ENCODE measurements at regions of chr17 and their contacts with region 1.

Region 1: DNA sequence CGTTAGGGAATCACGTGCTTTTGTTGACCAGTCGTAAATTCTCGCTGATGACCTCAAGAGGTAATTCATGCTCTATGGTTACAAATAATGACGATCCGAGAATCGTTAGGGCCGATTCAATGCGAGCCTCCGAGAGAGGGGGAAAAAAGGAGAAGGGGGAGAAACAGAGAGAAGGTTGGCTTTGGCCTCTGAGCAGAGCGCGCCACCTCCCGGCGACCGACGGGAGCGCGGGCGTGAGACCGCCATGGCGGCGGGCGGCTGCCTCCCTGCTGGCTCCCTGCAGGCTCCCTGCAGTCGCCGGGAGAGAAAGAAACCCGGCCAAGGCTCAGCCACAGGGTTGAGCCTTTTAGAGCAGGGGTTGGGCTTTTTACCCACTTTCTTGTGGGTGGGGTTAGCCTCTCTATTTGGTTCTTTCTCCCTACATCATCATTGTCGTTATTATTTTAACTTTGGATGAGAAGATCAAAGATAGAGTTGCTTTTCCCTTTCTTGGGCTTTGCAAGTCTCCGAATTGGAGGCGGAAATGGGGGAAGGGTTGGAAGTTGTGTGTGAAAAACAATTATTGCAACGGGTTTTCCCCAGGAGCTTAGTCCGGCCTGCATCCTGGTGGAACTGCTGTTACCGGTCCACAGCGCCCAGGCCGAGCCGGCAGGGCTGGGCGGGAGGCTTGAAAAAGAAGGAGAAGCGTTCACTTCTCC is 410 bp upstream of the HOXB5 start:
- DNase-seq: peak; percentile 81 to 94
- ATAC-seq: peak; percentile 74 to 92
- H3K4me3 ChIP-seq: peak overlapping the region; percentile 22; the same call in 2 of the 3 replicates
- H3K27ac ChIP-seq: peak overlapping the region in 1 of 2 experiments; percentile 60; a peak in 4 of 6 replicates
- H3K4me1 ChIP-seq: peaks cover 5% of the 10 kb centered on the region
- CTCF ChIP-seq: peak; percentile 99
- EP300 ChIP-seq: no peak
- POLR2A ChIP-seq: no peak
- RAD21 ChIP-seq: peak; percentile 91 to 94

Region 2: DNA sequence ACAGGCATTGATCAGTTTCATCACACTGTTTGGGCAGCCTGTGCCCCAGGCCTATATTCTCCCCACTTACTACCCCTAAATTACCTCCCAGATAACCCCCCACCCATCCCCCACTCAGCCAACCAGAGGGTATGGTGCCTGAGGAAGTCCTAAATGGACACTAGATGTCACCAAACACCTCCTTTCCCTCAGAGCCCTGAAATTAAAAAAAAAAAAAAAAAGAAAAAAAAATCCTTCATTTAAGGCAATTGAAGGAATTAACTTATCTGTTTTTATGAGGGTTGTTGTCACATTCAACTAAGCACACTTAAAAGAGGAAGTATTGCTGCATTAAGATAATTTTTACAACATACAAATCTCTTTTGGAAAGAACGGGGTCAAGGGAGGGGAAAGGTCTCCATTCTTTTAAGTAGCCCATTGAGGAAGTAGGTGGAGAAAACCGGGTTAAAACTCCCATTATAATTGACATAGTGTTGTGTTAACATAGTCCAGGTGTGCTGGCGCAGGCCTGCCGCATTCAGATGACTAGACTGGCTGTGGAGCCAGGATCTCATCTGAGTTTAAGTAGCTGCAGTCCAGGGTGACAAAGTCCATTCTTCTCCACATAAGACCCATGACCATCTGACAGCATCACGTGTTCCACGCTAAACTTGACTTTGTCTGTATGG is 440.2 kb before region 1 on chr17:
- CTCF ChIA-PET with region 1: interaction called, 11 read pairs
- POLR2A ChIA-PET with region 1: no interaction called
- DNase-seq: peak; percentile 74 to 75
- ATAC-seq: peak; percentile 72 to 87
- H3K4me3 ChIP-seq: no peak overlapping the region
- H3K27ac ChIP-seq: no peak overlapping the region
- H3K4me1 ChIP-seq: peaks cover 5% of the 10 kb centered on the region
- CTCF ChIP-seq: peak; percentile 84
- EP300 ChIP-seq: no peak
- POLR2A ChIP-seq: no peak
- RAD21 ChIP-seq: peak; percentile 78 to 84

Region 3: DNA sequence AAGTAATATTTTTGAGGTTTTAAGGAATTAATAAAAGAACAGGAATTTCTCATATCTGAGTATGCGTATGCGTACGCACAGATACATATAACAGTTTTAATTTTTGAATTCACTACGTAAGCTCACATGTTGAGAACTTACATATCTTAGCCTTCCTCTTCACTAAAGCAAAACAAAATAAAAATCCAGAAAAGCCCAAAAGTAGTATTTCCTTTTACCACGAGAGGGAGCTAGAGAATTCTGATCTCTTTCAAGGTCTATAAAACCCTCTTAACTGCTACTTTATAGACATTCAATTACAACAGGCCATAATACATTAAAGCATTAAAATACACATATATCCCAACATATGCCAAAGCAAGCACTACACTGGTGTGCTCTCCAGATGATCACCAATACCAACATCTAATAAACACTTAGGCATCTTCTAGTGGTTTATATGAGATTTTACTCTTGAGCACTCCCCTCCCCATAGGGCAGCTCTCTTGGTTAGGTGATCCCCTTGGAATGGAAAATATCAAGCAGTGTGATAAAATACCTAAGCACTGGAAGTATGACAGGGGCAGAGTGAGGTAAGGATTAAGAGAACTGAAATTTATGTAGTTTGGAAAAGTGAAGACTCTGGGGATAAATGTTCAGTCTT is 258.0 kb before region 1 on chr17:
- CTCF ChIA-PET with region 1: interaction called, 19 read pairs
- POLR2A ChIA-PET with region 1: no interaction called
- DNase-seq: peak; percentile 35 to 68
- ATAC-seq: peak; percentile 71 to 74; a peak in 5 of 6 replicates
- H3K4me3 ChIP-seq: no peak overlapping the region
- H3K27ac ChIP-seq: no peak overlapping the region
- H3K4me1 ChIP-seq: peaks cover 17% of the 10 kb centered on the region
- CTCF ChIP-seq: peak; percentile 94
- EP300 ChIP-seq: no peak
- POLR2A ChIP-seq: no peak
- RAD21 ChIP-seq: peak; percentile 75 to 79

Region 4: DNA sequence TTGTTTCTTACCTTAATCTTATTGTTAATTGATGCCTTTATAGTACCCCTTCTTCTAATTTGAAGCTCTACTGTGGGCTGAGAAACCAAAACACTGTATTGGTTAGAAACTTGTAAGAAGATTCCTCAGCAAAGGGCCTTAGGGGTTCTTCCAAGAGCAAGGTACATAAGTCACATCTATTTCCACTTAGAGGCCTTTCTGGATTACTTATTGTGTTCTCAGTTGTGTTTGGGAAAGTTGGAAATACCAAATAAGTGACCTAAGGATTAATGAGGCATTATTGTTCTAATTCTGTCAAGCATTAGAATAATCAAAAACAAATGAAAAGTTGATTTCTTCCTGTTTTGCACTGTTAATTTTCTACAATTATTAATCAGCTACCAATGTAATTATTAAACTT is 249.7 kb before region 1 on chr17:
- CTCF ChIA-PET with region 1: interaction called, 19 read pairs
- POLR2A ChIA-PET with region 1: no interaction called
- DNase-seq: no peak
- ATAC-seq: no peak
- H3K4me3 ChIP-seq: no peak overlapping the region
- H3K27ac ChIP-seq: no peak overlapping the region
- H3K4me1 ChIP-seq: no peaks in the 10 kb centered on the region
- CTCF ChIP-seq: no peak
- EP300 ChIP-seq: no peak
- POLR2A ChIP-seq: no peak
- RAD21 ChIP-seq: no peak

Region 5: GRCh38 chr17:48500966-48501426 is 93.0 kb before region 1 on chr17:
- CTCF ChIA-PET with region 1: interaction called, 15 read pairs
- POLR2A ChIA-PET with region 1: no interaction called
- DNase-seq: peak in 1 of 2 experiments; percentile 53
- ATAC-seq: peak; percentile 40 to 76; a peak in 4 of 6 replicates
- H3K4me3 ChIP-seq: no peak overlapping the region
- H3K27ac ChIP-seq: 0 out of 6 replicates have a peak overlapping the region, but pooled peaks of 1 of the 2 experiments have one; percentile 2
- H3K4me1 ChIP-seq: peaks cover 25% of the 10 kb centered on the region
- CTCF ChIP-seq: no peak; the same call in 2 of the 3 replicates
- EP300 ChIP-seq: no peak
- POLR2A ChIP-seq: no peak
- RAD21 ChIP-seq: peak; percentile 32 to 53; a peak in 3 of 5 replicates

Region 6: GRCh38 chr17:48555258-48556228 is 38.4 kb before region 1 on chr17:
- CTCF ChIA-PET with region 1: interaction called, 11 read pairs
- POLR2A ChIA-PET with region 1: no interaction called
- DNase-seq: peak; percentile 83 to 93
- ATAC-seq: peak; percentile 72 to 75
- H3K4me3 ChIP-seq: peak overlapping the region; percentile 60
- H3K27ac ChIP-seq: peak overlapping the region; percentile 97
- H3K4me1 ChIP-seq: peaks cover 31% of the 10 kb centered on the region
- CTCF ChIP-seq: no peak
- EP300 ChIP-seq: no peak
- POLR2A ChIP-seq: no peak; the same call in 1 of the 2 replicates
- RAD21 ChIP-seq: no peak; a peak in 1 of 5 replicates

Measured in A549 (cell line).